SK-N-SH (cell line): ENCODE measurements at regions of chr1 and their contacts with region 1.

Region 1: DNA sequence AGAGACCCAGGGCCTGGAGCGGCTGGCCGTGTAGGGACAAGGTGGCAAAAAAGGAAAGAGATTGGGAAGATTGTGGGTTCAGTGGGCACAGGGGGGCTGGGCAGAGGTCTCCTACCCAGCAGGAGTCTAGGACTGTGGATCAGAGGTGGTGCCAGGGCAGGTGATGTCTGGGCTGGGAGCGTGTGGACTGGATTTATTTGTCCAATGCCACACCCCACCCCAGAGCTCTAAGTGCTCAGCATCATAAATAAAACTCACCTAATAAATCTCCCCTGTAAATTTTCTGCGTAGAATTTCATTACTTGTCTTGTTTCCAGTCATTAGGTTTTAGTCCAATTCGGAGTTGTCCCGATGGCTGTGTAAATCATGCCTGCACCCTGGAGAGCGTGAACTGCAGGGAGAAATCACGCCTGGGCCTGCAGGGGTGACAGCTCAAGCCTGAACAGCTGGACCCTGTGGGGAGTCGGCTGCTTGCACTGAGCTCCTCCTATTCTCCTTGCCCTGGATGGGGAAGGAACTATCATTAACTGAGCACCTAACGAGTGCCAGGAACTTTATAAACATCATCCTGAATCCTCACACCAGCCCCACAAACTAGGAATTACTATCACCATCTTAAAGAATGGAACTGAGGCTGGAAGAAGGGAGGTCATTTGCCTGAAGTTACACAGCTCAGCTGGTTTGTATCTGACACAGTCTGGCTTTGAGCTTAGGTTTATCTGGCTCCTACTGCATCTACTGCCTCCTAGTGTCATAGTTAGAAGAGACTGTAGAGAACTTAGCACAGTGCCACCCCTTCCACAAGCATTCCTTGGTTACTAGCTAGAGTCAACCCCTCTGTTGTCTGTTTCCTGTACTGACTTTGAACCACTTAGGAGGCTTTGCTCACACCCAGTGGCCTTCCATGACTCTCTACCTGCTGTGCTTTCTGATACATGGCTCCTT is 25.0 kb upstream of the POU3F1 start:
- DNase-seq: peak; percentile 56
- H3K4me3 ChIP-seq: no peak overlapping the region
- H3K27ac ChIP-seq: no peak overlapping the region
- H3K4me1 ChIP-seq: peaks cover 4 to 7% of the 10 kb centered on the region in 2 experiments; a peak in 2 of 4 replicates
- H3K27me3 ChIP-seq: peaks cover 68% of the 10 kb centered on the region
- CTCF ChIP-seq: peak; percentile 43
- EP300 ChIP-seq: no peak
- RAD21 ChIP-seq: peak; percentile 53

Region 2: DNA sequence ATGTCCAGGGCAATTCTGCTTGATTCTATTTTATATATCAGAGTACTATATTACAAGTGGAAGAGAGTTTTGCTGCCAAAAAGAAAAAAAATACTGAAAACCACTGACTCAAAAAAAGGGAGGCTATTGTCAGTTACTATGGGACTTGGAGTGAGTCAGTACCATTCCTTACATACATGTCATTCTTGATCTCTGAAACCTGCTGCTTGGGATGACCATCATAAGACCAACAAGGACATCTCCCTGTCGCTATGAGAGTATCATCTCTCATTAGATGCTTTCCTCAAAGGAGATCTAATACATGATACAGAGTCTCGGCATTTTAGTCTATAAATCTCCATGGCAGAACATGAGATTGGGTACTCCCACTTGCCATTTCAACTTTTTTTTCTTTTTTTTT is 112.9 kb before region 1 on chr1:
- CTCF ChIA-PET with region 1: no interaction called
- POLR2A ChIA-PET with region 1: no interaction called
- DNase-seq: no peak
- H3K4me3 ChIP-seq: no peak overlapping the region
- H3K27ac ChIP-seq: peak overlapping the region; percentile 5 to 80; a peak in 3 of 4 replicates
- H3K4me1 ChIP-seq: peaks cover 0 to 15% of the 10 kb centered on the region in 2 experiments; a peak in 1 of 4 replicates
- H3K27me3 ChIP-seq: no peaks in the 10 kb centered on the region
- CTCF ChIP-seq: no peak
- EP300 ChIP-seq: peak in 1 of 2 experiments; percentile 81; a peak in 2 of 4 replicates
- RAD21 ChIP-seq: no peak

Region 3: GRCh38 chr1:38026592-38027200 is 44.9 kb before region 1 on chr1:
- CTCF ChIA-PET with region 1: interaction called, 32 read pairs
- POLR2A ChIA-PET with region 1: no interaction called
- DNase-seq: no peak
- H3K4me3 ChIP-seq: peak overlapping the region in 1 of 2 experiments; percentile 21; a peak in 1 of 4 replicates
- H3K27ac ChIP-seq: no peak overlapping the region
- H3K4me1 ChIP-seq: peaks cover 31 to 34% of the 10 kb centered on the region in 2 experiments; a peak in 3 of 4 replicates
- H3K27me3 ChIP-seq: no peaks in the 10 kb centered on the region
- CTCF ChIP-seq: peak; percentile 81
- EP300 ChIP-seq: no peak
- RAD21 ChIP-seq: peak; percentile 75

Region 4: DNA sequence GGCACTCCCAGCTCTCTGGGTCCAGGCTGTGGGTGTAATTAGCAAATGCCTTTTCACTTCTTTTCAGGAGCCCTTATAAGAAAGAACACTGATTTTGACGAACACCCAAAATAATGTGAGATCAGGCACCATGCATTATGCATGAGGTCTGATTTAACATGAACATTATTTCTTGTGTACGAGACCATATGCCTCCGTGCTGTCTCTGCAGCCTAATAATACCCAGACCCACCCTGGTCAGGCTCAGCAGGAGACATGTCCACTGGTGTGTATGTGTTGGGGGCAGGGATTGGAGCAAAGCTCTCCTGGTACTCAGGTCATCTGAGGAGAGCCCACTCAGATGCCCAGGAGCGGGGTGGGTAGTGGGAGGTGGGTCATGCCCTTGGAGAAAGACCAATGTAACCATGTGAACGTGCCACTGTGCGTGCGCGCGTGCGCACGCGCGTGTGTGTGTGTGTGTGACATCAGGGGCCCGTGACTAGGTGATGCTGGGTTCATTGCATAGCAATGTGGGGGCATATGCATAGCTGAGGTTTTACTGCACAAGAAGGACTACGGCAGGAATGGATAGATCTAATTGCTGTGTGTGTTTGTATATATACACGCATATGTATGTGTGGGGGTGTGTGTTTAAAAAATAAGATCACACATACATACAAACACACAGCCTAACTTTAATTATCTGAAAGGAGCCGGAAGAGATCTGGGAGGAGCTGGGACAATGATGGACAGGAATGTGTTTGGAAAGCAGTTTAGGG is 32.1 kb before region 1 on chr1:
- CTCF ChIA-PET with region 1: interaction called, 20 read pairs
- POLR2A ChIA-PET with region 1: interaction called, 4 read pairs
- DNase-seq: no peak
- H3K4me3 ChIP-seq: no peak overlapping the region
- H3K27ac ChIP-seq: no peak overlapping the region
- H3K4me1 ChIP-seq: peaks cover 0 to 5% of the 10 kb centered on the region in 2 experiments; a peak in 1 of 4 replicates
- H3K27me3 ChIP-seq: peaks cover 31% of the 10 kb centered on the region
- CTCF ChIP-seq: no peak
- EP300 ChIP-seq: no peak
- RAD21 ChIP-seq: no peak

Region 5: GRCh38 chr1:38046884-38047602 is 24.5 kb before region 1 on chr1:
- CTCF ChIA-PET with region 1: interaction called, 20 read pairs
- POLR2A ChIA-PET with region 1: no interaction called
- DNase-seq: peak; percentile 96
- H3K4me3 ChIP-seq: peak overlapping the region; percentile 44 to 59
- H3K27ac ChIP-seq: no peak overlapping the region
- H3K4me1 ChIP-seq: no peaks in the 10 kb centered on the region; a peak in 1 of 4 replicates
- H3K27me3 ChIP-seq: peaks cover 54% of the 10 kb centered on the region
- CTCF ChIP-seq: no peak; the same call in 1 of the 2 replicates
- EP300 ChIP-seq: no peak
- RAD21 ChIP-seq: no peak